ENCODE measurements at regions of chr1 and their contacts with region 1.

Region 1: DNA sequence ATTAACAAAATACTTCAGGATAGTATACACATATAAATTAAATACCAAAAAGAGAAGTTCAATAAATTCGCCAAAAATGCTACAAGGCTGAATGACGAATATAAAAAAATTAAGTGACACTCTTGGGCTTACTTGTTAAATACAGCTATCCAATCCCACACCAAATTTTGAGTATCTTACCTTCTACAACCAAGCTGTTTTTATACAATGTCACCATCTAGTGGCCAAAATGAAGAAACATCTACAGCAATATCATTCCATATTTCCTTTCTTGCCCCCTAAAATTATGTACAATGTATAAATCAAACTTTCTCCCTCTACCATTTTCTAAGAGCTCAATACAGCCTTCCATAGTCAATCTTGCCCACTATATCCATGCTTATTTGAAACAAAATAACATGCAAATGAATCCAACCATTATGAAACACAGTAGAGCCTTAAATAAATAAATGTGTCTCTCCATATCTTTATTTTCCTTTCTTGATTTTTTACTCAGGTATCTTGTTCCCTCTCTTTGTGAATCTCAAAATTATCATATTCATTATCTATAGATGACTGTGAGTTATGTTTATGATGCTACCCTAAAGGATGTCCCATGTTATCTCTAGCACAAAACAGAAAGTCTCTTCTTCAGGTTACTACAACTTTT is 86.3 kb downstream of the ACBD6 start:
- DNase-seq: peak; percentile 63
- H3K4me3 ChIP-seq: no peak overlapping the region
- H3K27ac ChIP-seq: no peak overlapping the region
- H3K4me1 ChIP-seq: no peaks in the 10 kb centered on the region
- H3K27me3 ChIP-seq: no peaks in the 10 kb centered on the region
- CTCF ChIP-seq: peak; percentile 78

Region 2: GRCh38 chr1:180188091-180188506 is 228.0 kb before region 1 on chr1:
- CTCF ChIA-PET with region 1: interaction called, 11 read pairs
- POLR2A ChIA-PET with region 1: no interaction called
- intact Hi-C with region 1: loop called (anchors 1 kb)
- DNase-seq: peak; percentile 72
- H3K4me3 ChIP-seq: no peak overlapping the region
- H3K27ac ChIP-seq: no peak overlapping the region
- H3K4me1 ChIP-seq: no peaks in the 10 kb centered on the region
- H3K27me3 ChIP-seq: no peaks in the 10 kb centered on the region
- CTCF ChIP-seq: peak; percentile 85

Region 3: DNA sequence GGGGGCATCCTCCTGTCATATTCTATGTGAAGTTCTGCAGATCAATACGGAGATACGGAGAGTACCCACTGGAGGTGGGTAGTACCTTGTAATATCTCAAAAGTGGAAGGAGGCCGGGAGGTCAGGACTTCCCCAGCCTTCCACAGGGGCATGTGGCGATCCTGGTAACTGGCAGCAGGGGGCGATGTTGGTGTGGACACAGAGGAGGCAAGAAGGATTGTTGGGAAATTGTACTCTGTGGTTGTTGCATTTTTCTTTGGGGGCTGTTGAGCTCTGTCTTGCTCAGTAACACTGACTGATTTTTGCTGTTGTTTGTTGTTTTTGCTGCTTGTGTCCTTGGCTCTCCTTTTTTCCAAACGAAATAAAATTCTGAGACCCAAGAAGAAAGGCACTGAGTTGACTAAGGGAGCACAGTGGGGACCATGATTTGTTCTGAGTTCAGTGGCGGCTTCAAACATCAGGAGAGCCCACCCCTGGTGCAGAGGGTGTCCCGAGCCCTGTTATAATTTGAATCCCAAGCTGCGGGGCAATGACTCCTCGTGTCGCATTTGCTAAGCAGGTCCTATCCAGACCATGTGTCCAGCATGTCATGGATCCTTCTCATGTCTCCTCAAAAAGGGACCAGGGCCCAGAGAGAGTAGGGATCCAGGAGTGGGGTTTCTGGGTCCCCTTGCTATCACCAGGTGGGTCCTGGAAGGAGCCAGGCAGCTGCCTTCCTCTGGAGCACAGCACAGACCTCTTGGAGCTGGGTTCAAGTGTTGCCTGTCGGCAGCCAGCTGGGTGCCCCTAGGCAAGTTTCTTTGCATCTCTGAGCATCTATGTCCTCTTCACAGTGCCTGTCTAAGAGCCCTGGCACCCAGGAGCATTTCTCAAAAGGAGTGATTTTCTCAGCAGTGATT is 163.2 kb before region 1 on chr1:
- CTCF ChIA-PET with region 1: interaction called, 4 read pairs
- POLR2A ChIA-PET with region 1: no interaction called
- intact Hi-C with region 1: loop called (anchors 1 kb)
- DNase-seq: peak; percentile 80
- H3K4me3 ChIP-seq: no peak overlapping the region
- H3K27ac ChIP-seq: no peak overlapping the region
- H3K4me1 ChIP-seq: no peaks in the 10 kb centered on the region
- H3K27me3 ChIP-seq: no peaks in the 10 kb centered on the region
- CTCF ChIP-seq: peak; percentile 92

Region 4: GRCh38 chr1:180343931-180344769 is 72.0 kb before region 1 on chr1:
- CTCF ChIA-PET with region 1: no interaction called
- POLR2A ChIA-PET with region 1: no interaction called
- intact Hi-C with region 1: no loop called
- DNase-seq: peak; percentile 49
- H3K4me3 ChIP-seq: no peak overlapping the region
- H3K27ac ChIP-seq: no peak overlapping the region
- H3K4me1 ChIP-seq: peaks cover 27% of the 10 kb centered on the region
- H3K27me3 ChIP-seq: no peaks in the 10 kb centered on the region
- CTCF ChIP-seq: no peak